ENCODE measurements at regions of chr17 and their contacts with region 1.

Region 1: GRCh38 chr17:49053171-49053829 is 56.1 kb downstream of the IGF2BP1 start:
- DNase-seq: no peak
- ATAC-seq: peak; percentile 21 to 50; a peak in 4 of 6 replicates
- H3K4me3 ChIP-seq: no peak overlapping the region
- H3K27ac ChIP-seq: peak overlapping the region in 1 of 2 experiments; percentile 25; a peak in 1 of 6 replicates
- H3K4me1 ChIP-seq: no peaks in the 10 kb centered on the region
- CTCF ChIP-seq: no peak
- EP300 ChIP-seq: no peak
- POLR2A ChIP-seq: no peak
- RAD21 ChIP-seq: no peak

Region 2: DNA sequence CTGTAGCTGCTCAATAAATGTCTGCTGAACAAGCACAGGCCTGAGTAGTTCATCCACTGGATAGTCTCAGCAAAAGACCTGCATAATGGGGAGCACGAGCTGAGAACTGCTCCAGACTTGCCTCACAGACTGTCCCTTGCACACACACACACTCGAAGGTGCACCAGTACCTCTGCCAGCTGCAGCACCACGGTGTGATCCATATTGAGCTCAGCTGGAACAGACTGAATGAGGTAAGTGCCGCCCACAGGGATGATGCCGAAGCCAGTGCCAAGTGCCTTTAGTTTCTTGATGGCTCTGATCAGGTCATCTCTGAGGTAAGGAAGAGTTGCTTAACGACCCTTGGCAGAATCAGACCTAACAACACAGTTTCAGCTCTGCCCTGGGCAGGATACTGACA is 120.3 kb before region 1 on chr17:
- CTCF ChIA-PET with region 1: no interaction called
- POLR2A ChIA-PET with region 1: no interaction called
- DNase-seq: no peak
- ATAC-seq: peak; percentile 12 to 24; a peak in 3 of 6 replicates
- H3K4me3 ChIP-seq: no peak overlapping the region
- H3K27ac ChIP-seq: no peak overlapping the region
- H3K4me1 ChIP-seq: no peaks in the 10 kb centered on the region
- CTCF ChIP-seq: no peak
- EP300 ChIP-seq: no peak
- POLR2A ChIP-seq: no peak
- RAD21 ChIP-seq: no peak

Region 3: DNA sequence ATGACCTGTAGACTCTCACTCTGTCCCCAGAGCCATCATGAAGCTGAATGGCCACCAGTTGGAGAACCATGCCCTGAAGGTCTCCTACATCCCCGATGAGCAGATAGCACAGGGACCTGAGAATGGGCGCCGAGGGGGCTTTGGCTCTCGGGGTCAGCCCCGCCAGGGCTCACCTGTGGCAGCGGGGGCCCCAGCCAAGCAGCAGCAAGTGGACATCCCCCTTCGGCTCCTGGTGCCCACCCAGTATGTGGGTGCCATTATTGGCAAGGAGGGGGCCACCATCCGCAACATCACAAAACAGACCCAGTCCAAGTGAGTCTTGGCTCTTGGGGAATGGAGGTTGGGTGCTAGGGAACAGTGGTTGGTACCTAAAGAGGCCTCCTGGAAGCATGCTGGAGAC is 15.2 kb before region 1 on chr17:
- CTCF ChIA-PET with region 1: interaction called, 107 read pairs
- POLR2A ChIA-PET with region 1: no interaction called
- DNase-seq: no peak
- ATAC-seq: no peak
- H3K4me3 ChIP-seq: no peak overlapping the region
- H3K27ac ChIP-seq: no peak overlapping the region
- H3K4me1 ChIP-seq: no peaks in the 10 kb centered on the region
- CTCF ChIP-seq: no peak
- EP300 ChIP-seq: no peak
- POLR2A ChIP-seq: no peak
- RAD21 ChIP-seq: no peak

Region 4: DNA sequence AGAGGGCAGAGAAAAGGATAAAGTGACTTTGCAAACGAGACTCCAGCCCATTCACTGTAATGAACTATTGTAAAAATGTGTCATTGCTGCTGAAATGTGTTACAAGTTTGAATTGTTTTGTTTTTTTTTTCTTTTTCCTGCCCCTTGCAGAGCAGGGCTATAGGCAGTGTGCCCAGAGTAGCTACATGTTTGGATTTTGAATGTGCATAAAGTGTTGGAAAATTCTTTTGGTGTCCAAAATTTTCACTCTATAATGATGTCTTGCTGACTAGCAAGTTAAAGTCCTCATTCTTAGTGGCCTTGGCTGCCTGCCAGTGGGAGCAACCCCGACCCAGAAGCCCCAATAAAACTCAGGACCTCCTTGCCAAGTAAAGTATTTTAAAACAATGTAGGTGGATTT is 10.4 kb after region 1 on chr17:
- CTCF ChIA-PET with region 1: interaction called, 10 read pairs
- POLR2A ChIA-PET with region 1: no interaction called
- DNase-seq: no peak
- ATAC-seq: no peak
- H3K4me3 ChIP-seq: no peak overlapping the region
- H3K27ac ChIP-seq: no peak overlapping the region
- H3K4me1 ChIP-seq: peaks cover 4% of the 10 kb centered on the region
- CTCF ChIP-seq: no peak
- EP300 ChIP-seq: no peak
- POLR2A ChIP-seq: no peak
- RAD21 ChIP-seq: no peak

Measured in A549 (cell line).